PC-9 (cell line): ENCODE measurements at regions of chr6 and their contacts with region 1.

Region 1: DNA sequence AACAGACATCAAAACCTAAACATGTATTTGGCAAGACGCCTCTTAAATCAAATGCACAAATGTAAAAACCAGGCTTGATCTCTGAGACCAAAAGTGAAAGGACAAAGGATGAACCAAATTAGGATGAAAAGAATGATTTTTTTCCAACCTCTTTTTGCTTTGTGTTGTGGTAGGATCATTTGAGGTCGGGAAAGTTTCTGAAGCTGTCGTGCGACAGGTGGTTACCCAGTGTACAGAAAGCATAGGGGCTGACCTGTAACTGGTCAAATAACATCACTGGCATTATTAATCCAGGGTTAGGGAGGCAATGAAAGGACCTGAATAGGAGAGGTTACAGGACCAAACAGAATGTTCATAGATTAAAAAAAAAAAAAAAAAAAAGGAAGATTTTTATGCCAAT is 18.1 kb upstream of the NOL7 start:
- DNase-seq: no peak
- H3K4me3 ChIP-seq: no peak overlapping the region
- H3K27ac ChIP-seq: no peak overlapping the region
- H3K4me1 ChIP-seq: no peaks in the 10 kb centered on the region
- H3K27me3 ChIP-seq: no peaks in the 10 kb centered on the region
- CTCF ChIP-seq: no peak

Region 2: GRCh38 chr6:13654496-13654895 is 57.4 kb after region 1 on chr6:
- CTCF ChIA-PET with region 1: no interaction called
- POLR2A ChIA-PET with region 1: no interaction called
- intact Hi-C with region 1: loop called (anchors 2 kb)
- DNase-seq: no peak
- H3K4me3 ChIP-seq: no peak overlapping the region
- H3K27ac ChIP-seq: no peak overlapping the region
- H3K4me1 ChIP-seq: peaks cover 5% of the 10 kb centered on the region
- H3K27me3 ChIP-seq: no peaks in the 10 kb centered on the region
- CTCF ChIP-seq: no peak